GM12878 (cell line): ENCODE measurements at regions of chr7 and their contacts with region 1.

Region 1: DNA sequence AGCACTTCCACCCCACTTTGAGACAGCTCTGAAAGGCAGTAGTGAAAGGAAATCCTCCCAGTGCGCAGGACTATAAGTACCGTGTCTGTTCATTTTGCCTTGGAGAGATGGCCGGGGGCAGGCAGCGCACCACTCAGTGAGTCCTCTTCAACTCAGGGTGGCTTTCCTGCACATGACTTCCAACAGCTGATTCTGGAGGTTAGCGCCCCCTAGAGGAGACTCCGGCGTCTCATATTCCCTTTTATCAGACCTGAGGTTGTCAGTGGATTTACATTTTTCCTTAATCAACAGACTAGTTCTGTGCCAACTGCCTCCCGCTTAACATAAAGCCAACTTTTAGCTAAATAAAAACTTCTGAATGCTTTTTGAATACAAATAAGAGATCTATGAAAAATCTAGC is 101.0 kb downstream of the HERPUD2 start:
- DNase-seq: no peak
- ATAC-seq: no peak
- H3K4me3 ChIP-seq: no peak overlapping the region
- H3K27ac ChIP-seq: no peak overlapping the region
- H3K4me1 ChIP-seq: no peaks in the 10 kb centered on the region
- H3K27me3 ChIP-seq: no peaks in the 10 kb centered on the region; a peak in 1 of 4 replicates
- CTCF ChIP-seq: peak; percentile 10 to 56 (median 40); a peak in 4 of 6 replicates
- EP300 ChIP-seq: no peak
- POLR2A ChIP-seq: no peak
- RAD21 ChIP-seq: no peak

Region 2: DNA sequence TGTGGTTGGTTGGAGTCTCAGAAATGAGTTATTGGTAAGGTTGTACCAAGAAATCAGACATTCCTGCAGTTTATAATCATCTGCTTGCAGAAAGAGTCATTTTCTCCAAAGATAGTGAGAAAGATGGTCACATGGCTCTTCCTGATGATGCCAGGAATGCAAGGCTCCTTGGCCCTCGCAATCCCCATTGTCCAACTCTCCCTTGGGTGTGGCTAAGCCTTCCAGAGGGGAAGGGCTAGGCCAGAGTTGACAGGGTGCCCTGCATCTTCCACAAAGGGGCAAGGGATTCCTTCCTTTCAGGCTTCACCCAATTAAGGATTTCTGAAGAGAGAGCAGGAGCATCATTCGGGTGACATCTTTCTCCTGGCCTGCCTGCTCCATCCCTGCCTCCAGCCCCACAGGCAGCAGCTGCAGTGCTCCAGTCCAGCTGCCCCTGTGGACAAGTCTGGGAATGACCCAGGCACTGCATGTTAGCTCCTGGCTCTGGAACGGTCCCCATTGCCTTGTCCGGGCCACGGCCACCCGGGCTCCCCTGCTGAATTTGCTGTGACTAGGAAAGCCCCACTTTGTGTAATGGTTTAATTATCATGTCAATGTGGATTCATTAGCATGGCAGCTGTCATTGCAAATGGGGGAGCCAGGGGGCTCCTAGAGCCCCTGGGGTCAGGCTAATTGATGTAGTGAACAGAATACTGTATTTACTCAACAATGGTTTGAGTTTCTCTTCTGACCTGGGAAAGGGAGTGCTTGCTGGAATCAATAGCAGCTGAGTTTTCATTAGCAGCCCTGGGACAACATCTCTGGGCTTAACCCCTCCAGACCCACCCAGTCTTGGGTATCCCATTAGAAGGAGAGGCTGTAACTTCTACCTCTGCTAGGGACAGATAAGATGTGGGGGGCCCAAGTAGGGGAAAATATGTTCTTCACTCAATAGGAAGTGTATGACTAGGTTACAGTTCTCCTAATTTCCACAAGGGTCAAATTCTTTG is 227.4 kb before region 1 on chr7:
- CTCF ChIA-PET with region 1: no interaction called
- POLR2A ChIA-PET with region 1: no interaction called
- RAD21 ChIA-PET with region 1: no interaction called
- SMC1A ChIA-PET with region 1: no interaction called
- in situ Hi-C with region 1: no loop called
- intact Hi-C with region 1: no loop called
- DNase-seq: no peak
- ATAC-seq: no peak
- H3K4me3 ChIP-seq: no peak overlapping the region
- H3K27ac ChIP-seq: no peak overlapping the region
- H3K4me1 ChIP-seq: no peaks in the 10 kb centered on the region
- H3K27me3 ChIP-seq: no peaks in the 10 kb centered on the region; a peak in 1 of 4 replicates
- CTCF ChIP-seq: no peak
- EP300 ChIP-seq: no peak
- POLR2A ChIP-seq: no peak
- RAD21 ChIP-seq: no peak

Region 3: DNA sequence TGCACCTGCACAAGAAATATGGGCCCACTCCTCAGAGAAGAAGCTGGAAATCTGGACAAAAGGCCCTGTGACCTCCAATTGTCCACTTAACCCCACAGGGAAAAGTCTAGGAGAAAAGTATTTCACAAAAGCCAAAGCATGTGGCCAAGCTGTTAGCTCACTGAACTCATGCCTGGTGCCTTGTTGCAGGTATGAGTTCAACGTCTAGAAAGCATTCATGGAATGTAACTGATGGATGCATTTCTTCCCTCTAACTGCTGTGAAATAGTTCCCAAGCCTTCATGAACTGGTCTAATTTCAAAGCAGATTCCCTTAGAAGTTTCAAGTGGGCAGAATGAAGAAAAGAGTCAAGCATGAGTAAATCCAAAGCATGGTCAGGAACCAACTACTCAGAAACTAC is 15.4 kb before region 1 on chr7:
- CTCF ChIA-PET with region 1: interaction called, 15 read pairs
- POLR2A ChIA-PET with region 1: no interaction called
- RAD21 ChIA-PET with region 1: no interaction called
- SMC1A ChIA-PET with region 1: no interaction called
- in situ Hi-C with region 1: no loop called
- intact Hi-C with region 1: no loop called
- DNase-seq: no peak
- ATAC-seq: no peak
- H3K4me3 ChIP-seq: no peak overlapping the region
- H3K27ac ChIP-seq: no peak overlapping the region
- H3K4me1 ChIP-seq: no peaks in the 10 kb centered on the region
- H3K27me3 ChIP-seq: no peaks in the 10 kb centered on the region; a peak in 1 of 4 replicates
- CTCF ChIP-seq: no peak
- EP300 ChIP-seq: no peak
- POLR2A ChIP-seq: no peak
- RAD21 ChIP-seq: no peak

Region 4: GRCh38 chr7:35695473-35695850 is 101.6 kb after region 1 on chr7:
- CTCF ChIA-PET with region 1: no interaction called
- POLR2A ChIA-PET with region 1: no interaction called
- RAD21 ChIA-PET with region 1: no interaction called
- SMC1A ChIA-PET with region 1: no interaction called
- in situ Hi-C with region 1: no loop called
- intact Hi-C with region 1: no loop called
- DNase-seq: no peak
- ATAC-seq: peak; percentile 0; the same call in 2 of the 3 replicates
- H3K4me3 ChIP-seq: peak overlapping the region; percentile 94
- H3K27ac ChIP-seq: peak overlapping the region; percentile 91
- H3K4me1 ChIP-seq: no peaks in the 10 kb centered on the region
- H3K27me3 ChIP-seq: no peaks in the 10 kb centered on the region
- CTCF ChIP-seq: no peak
- EP300 ChIP-seq: no peak
- POLR2A ChIP-seq: no peak
- RAD21 ChIP-seq: no peak